CD8-positive, alpha-beta memory T cell (primary cell): ENCODE measurements at regions of chr2 and their contacts with region 1.

Region 1: DNA sequence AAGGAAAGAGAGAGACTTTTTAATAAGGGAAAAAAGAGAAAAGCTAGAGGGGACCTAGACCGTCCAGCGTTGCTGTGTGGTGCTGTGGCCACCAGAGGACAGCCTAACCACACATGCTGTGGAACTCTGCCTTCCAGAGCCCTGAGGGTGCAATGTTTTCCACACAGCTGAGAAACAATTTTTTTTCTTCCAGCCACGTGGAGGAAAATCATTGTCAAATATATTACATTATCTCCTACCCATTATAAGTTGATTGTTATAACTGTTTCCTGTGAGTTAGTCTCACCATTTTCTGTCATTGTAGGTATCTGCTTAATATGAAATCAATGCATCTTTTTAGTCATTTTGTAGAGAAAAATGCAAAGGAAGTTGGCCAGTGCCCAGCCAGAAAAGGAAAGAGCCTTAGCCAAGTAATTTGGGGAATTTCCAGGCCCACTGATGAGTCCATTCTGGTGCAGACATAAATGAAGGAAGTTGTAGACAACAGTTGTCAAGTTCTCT is 5.9 kb upstream of the MRPL19 start:
- DNase-seq: peak; percentile 21 to 56 (median 23)
- H3K4me3 ChIP-seq: no peak overlapping the region
- H3K4me3 Mint-ChIP-seq: no peak overlapping the region
- H3K27ac ChIP-seq: no peak overlapping the region
- H3K27ac Mint-ChIP-seq: no peak overlapping the region
- H3K4me1 ChIP-seq: no peaks in the 10 kb centered on the region
- H3K4me1 Mint-ChIP-seq: peaks cover 0 to 6% (median 0%) of the 10 kb centered on the region in 3 donors
- H3K27me3 ChIP-seq: no peaks in the 10 kb centered on the region
- H3K27me3 Mint-ChIP-seq: peaks cover 7 to 30% of the 10 kb centered on the region in 2 donors

Region 2: GRCh38 chr2:75657794-75658193 is 17.1 kb after region 1 on chr2:
- CTCF ChIA-PET with region 1: no interaction called
- POLR2A ChIA-PET with region 1: no interaction called
- DNase-seq: no peak
- H3K4me3 ChIP-seq: no peak overlapping the region
- H3K4me3 Mint-ChIP-seq: no peak overlapping the region
- H3K27ac ChIP-seq: no peak overlapping the region
- H3K27ac Mint-ChIP-seq: no peak overlapping the region
- H3K4me1 ChIP-seq: no peaks in the 10 kb centered on the region
- H3K4me1 Mint-ChIP-seq: peaks cover 27 to 46% (median 40%) of the 10 kb centered on the region in 3 donors
- H3K27me3 ChIP-seq: no peaks in the 10 kb centered on the region
- H3K27me3 Mint-ChIP-seq: no peaks in the 10 kb centered on the region

Region 3: GRCh38 chr2:75676464-75676863 is 35.8 kb after region 1 on chr2:
- CTCF ChIA-PET with region 1: interaction called, 14 read pairs
- POLR2A ChIA-PET with region 1: no interaction called
- DNase-seq: no peak
- H3K4me3 ChIP-seq: no peak overlapping the region
- H3K4me3 Mint-ChIP-seq: no peak overlapping the region
- H3K27ac ChIP-seq: no peak overlapping the region
- H3K27ac Mint-ChIP-seq: no peak overlapping the region
- H3K4me1 ChIP-seq: no peaks in the 10 kb centered on the region
- H3K4me1 Mint-ChIP-seq: peaks cover 7 to 8% (median 8%) of the 10 kb centered on the region in 3 donors
- H3K27me3 ChIP-seq: no peaks in the 10 kb centered on the region
- H3K27me3 Mint-ChIP-seq: no peaks in the 10 kb centered on the region